GM10248 (cell line): ENCODE measurements at regions of chr16 and their contacts with region 1.

Region 1: DNA sequence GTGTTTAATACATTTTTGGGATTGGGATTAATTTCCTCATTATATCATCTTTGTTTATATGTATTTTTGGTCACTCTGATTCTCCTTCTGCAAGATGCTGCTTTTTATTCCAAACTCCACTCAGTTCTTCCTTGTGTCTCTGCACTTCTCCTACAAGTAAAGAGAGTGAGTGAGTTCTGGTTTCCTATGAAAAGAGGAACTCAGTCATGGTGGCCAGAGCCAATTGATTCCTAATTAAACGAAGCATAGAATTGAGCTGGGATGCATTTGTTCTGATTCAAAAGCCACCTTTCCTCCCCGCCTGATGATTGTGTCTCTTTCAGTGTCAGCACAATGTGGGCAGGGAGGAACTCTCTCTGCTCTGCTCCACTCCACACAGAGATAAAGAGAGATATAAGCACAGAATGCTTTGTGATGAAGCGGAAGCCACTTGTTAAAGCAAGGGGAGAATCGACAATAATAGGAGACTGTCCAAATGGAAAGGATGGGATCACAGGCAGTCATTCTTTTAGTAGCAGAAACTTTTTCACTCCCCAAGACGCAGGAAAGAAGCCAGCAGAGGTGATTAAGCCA is 121.3 kb upstream of the GOT2 start:
- DNase-seq: no peak
- CTCF ChIP-seq: no peak

Region 2: GRCh38 chr16:58843675-58844074 is 11.7 kb before region 1 on chr16:
- CTCF ChIA-PET with region 1: interaction called, 10 read pairs
- POLR2A ChIA-PET with region 1: no interaction called
- DNase-seq: peak; percentile 23
- CTCF ChIP-seq: peak; percentile 40

Region 3: GRCh38 chr16:58906981-58907715 is 51.8 kb after region 1 on chr16:
- CTCF ChIA-PET with region 1: no interaction called
- POLR2A ChIA-PET with region 1: no interaction called
- DNase-seq: no peak
- CTCF ChIP-seq: no peak

Region 4: GRCh38 chr16:58970775-58971174 is 115.4 kb after region 1 on chr16:
- CTCF ChIA-PET with region 1: no interaction called
- POLR2A ChIA-PET with region 1: no interaction called
- DNase-seq: no peak
- CTCF ChIP-seq: no peak